Panc1 (cell line): ENCODE measurements at regions of chr5 and their contacts with region 1.

Region 1: GRCh38 chr5:10424124-10424731 is 17.5 kb upstream of the ROPN1L start:
- DNase-seq: no peak
- ATAC-seq: peak; percentile 83
- H3K4me3 ChIP-seq: no peak overlapping the region
- H3K27ac ChIP-seq: no peak overlapping the region
- H3K4me1 ChIP-seq: no peaks in the 10 kb centered on the region
- H3K27me3 ChIP-seq: no peaks in the 10 kb centered on the region
- CTCF ChIP-seq: peak; percentile 81

Region 2: DNA sequence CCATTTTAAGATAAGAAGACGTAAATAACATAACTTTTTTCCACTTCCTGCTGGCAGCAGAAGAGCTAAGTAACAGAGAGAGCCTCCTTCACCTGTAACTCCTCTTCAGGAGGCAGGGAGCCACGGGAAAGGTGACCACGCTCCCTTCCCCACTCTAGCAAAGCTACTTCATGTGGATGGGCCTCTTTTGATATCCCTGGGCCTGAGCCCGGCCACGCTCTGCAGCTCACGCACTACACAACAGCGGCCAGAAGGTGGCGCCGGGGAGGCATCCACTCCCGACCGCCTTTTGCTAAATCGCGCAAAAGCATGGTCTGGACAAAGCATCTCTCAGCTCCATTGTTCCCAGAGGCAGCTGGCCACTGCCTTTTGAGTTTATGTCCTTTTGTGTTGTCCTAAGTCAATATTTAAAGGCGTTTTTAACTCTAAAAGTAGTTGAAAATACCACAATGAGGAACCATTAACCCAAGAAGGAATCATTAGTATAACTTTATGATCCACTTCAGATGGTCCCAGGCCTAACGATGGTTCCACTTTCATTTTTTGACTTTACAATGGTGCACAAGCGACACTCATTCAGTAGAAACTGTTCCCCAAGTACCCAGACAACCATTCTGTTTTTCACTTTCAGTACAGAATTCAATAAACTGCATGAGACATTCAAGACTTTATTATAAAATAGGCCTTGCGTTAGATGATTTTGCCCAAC is 140.1 kb before region 1 on chr5:
- CTCF ChIA-PET with region 1: interaction called, 7 read pairs
- POLR2A ChIA-PET with region 1: no interaction called
- in situ Hi-C with region 1: no loop called
- intact Hi-C with region 1: loop called (anchors 2 kb)
- DNase-seq: no peak
- ATAC-seq: peak; percentile 99
- H3K4me3 ChIP-seq: no peak overlapping the region
- H3K27ac ChIP-seq: no peak overlapping the region
- H3K4me1 ChIP-seq: peaks cover 10% of the 10 kb centered on the region; the same call in 1 of the 2 replicates
- H3K27me3 ChIP-seq: no peaks in the 10 kb centered on the region
- CTCF ChIP-seq: peak; percentile 98

Region 3: GRCh38 chr5:10333154-10334006 is 90.8 kb before region 1 on chr5:
- CTCF ChIA-PET with region 1: interaction called, 10 read pairs
- POLR2A ChIA-PET with region 1: no interaction called
- in situ Hi-C with region 1: no loop called
- intact Hi-C with region 1: no loop called
- DNase-seq: no peak
- ATAC-seq: peak; percentile 90
- H3K4me3 ChIP-seq: peak overlapping the region; percentile 70 to 87
- H3K27ac ChIP-seq: peak overlapping the region; percentile 80
- H3K4me1 ChIP-seq: peaks cover 29% of the 10 kb centered on the region
- H3K27me3 ChIP-seq: no peaks in the 10 kb centered on the region
- CTCF ChIP-seq: no peak

Region 4: GRCh38 chr5:10360686-10361085 is 63.5 kb before region 1 on chr5:
- CTCF ChIA-PET with region 1: no interaction called
- POLR2A ChIA-PET with region 1: interaction called, 11 read pairs
- in situ Hi-C with region 1: no loop called
- intact Hi-C with region 1: no loop called
- DNase-seq: no peak
- ATAC-seq: no peak
- H3K4me3 ChIP-seq: no peak overlapping the region
- H3K27ac ChIP-seq: no peak overlapping the region
- H3K4me1 ChIP-seq: peaks cover 32% of the 10 kb centered on the region; the same call in 1 of the 2 replicates
- H3K27me3 ChIP-seq: no peaks in the 10 kb centered on the region
- CTCF ChIP-seq: no peak